Right cardiac atrium (tissue), 5 donors: ENCODE measurements at regions of chr1 and their contacts with region 1.

Region 1: DNA sequence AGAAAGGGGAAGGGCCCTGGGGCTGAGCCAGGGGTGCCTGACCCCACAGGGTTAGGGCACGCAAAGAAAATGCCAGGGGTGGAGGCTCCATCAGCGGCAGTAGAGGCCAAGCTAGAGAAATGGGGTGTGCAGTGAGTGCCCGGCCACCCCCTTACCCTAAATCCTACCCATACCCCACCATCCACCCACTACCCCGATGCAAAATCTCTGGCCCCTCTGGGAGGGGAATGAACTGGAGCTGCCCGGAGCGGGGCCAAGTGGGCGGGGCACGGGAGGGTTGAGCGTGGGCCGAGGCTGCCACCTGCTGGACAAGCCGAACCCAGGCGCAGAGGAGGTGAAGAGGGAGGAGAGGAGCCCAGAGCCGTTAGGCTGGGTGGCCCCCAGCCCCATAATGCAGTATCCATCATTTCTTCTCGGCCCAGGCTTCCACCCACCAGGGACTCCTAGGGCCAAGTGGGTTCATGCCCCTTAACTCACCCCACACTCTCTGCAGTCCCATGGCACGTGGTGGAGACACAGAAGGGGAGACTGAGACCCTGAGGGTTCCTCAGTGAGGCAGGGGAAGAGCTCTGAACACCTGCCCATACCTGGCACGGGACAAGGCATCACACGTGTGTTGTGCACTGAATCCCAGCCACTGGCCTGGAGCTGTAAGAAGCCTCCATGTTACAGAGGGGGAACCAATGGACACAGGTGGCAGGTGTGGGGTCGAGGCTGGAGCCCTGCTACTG is 1.4 kb upstream of the C1QC start:
- DNase-seq: peak; percentile 88 to 95 (median 95)
- ATAC-seq: peak; percentile 77 to 83
- H3K4me3 ChIP-seq: no peak overlapping the region
- H3K27ac ChIP-seq: no peak overlapping the region
- H3K4me1 ChIP-seq: no peaks in the 10 kb centered on the region
- H3K27me3 ChIP-seq: no peaks in the 10 kb centered on the region

Region 2: DNA sequence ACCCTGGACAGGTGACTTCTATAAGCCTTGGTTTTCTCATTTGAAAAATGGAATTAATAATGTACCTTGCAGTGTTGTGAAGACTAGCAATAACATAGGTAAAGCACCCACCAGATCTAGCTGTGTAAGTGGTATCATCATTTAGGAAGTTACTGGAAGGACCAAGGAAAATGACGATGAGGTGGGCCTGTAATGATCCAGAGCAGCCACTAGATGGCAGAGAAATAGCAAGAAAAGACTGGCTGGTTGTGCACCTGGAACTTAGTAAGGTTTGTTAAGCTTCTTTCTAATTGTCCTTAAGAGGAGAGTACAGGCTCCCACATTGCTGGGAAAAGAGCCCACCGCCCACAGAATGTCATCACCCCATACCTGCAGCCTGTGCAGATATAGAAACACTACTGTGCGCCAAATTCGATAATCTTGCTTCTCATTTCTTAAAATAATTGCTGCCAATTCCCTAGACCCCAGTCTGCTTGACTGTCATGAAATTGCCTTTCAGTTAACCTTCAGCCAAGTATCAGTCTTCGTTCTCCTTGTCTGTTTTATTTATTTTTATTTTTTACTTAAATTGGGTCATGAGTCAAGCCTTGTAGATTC is 536.4 kb before region 1 on chr1:
- intact Hi-C with region 1: loop called in 1 of 4 experiments (anchors 10 kb)
- DNase-seq: peak in 1 of 3 donors; percentile 23
- ATAC-seq: peak in 1 of 2 donors; percentile 47
- H3K4me3 ChIP-seq: no peak overlapping the region
- H3K27ac ChIP-seq: no peak overlapping the region
- H3K4me1 ChIP-seq: peaks cover 5% of the 10 kb centered on the region
- H3K27me3 ChIP-seq: no peaks in the 10 kb centered on the region

Region 3: GRCh38 chr1:22126531-22126930 is 515.5 kb before region 1 on chr1:
- intact Hi-C with region 1: loop called in 1 of 4 experiments (anchors 5 kb)
- DNase-seq: peak in 1 of 3 donors; percentile 49
- ATAC-seq: peak in 1 of 2 donors; percentile 6
- H3K4me3 ChIP-seq: no peak overlapping the region
- H3K27ac ChIP-seq: no peak overlapping the region
- H3K4me1 ChIP-seq: no peaks in the 10 kb centered on the region
- H3K27me3 ChIP-seq: no peaks in the 10 kb centered on the region

Region 4: DNA sequence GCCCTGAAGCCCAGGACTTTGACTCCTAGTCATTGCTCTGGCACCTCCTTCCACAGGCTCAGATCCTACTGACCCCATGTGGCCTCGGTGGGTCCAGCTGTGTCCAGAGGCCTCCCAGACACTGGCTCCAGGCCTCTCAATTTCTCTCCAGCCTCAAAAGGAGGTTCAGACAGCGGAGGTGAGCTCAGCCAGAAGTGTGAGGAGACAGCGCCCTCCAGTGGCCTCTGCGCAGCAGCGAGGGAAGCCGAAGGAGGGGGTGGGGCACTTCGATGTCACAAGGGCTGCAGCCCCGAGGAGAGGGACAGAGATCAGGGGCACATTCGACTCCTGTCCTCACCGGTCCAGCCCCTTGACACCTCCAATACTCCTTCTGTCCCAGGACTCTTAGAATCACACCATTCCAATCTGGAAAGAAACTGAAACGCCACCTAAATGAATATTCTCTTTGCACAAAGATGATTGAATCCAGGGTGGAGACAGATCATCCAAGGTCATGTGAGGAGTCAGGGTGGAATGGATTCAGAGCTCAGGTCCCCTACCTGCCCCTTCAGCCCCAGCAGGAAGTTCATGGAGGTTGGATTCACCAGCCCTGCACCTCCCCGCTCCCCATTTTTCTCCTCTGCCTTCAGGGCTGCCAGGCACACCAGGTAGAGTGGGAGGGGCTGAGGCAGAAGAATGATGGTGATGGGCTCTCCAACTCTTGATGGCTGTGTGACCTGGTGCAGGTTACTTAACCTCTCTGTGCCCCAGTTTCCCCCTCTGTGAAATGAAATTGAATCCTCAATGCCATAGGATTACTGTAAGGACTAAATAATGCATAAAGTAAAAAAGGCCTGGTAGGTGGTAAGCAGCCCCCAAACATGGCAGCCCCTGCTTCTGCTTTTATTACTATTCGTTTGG is 225.3 kb before region 1 on chr1:
- intact Hi-C with region 1: loop called (anchors 1 to 2 kb)
- DNase-seq: peak; percentile 58 to 84 (median 84)
- ATAC-seq: peak; percentile 39 to 49
- H3K4me3 ChIP-seq: no peak overlapping the region
- H3K27ac ChIP-seq: no peak overlapping the region
- H3K4me1 ChIP-seq: peaks cover 4% of the 10 kb centered on the region
- H3K27me3 ChIP-seq: no peaks in the 10 kb centered on the region

Region 5: DNA sequence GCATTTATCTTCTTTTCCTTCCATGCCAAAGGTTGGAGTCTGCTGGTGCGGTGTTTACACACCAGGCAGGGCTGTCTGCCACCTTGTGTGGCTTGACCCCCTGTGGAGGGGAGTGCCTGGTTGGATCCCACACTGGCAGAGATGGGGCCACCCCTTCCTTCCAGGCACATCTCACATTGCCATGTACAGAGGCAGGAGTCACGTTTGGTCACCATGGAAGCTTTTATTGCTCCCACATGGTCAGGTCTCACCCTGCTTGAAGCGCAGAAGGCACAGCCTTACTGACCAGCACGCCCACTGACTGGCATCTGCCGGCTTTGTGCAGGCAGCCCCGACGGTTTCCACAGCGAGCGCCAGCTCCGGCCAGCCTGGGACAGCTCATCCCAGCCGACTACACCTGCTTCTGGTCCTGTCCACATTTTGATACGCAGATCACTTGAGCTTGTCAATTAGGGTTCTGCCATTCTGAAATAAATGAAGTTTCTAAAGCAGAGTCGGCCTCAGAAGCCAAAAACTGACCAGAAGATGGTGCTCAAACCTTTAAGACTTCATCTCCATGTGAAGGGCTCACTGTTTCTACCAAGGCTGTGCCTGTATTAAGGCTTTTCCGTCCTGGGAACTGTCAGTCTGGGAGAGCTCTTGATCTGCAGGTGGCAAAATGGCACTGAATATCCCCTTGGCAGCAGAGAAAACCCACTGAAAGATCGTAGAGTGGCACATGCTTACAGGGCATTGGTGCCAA is 114.3 kb before region 1 on chr1:
- intact Hi-C with region 1: loop called in 2 of 4 experiments (anchors 10 kb)
- DNase-seq: no peak
- ATAC-seq: no peak
- H3K4me3 ChIP-seq: no peak overlapping the region
- H3K27ac ChIP-seq: no peak overlapping the region
- H3K4me1 ChIP-seq: peaks cover 10% of the 10 kb centered on the region
- H3K27me3 ChIP-seq: no peaks in the 10 kb centered on the region